Endothelial cell of umbilical vein (primary cell): ENCODE measurements at regions of chr2 and their contacts with region 1.

Region 1: DNA sequence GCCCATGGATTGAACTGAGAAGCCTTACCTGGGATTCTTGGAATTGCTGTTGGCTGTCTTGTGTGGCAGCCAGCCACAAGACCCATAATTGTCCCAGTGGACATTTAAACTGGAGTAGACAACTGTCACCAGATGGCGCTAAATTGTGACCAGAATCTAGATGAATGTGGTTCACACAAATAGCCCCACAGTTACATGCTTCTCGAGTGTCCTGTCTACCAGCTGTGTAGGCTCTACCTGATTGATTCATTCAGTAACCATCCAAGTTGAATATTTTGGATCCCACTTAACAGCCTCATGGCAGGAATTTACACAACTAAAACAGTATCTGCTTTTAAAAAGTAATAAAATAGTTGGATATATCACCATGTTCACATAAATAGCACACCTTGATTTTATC is 73.2 kb downstream of the MAP4K4 start:
- DNase-seq: peak; percentile 58
- H3K4me3 ChIP-seq: no peak overlapping the region
- H3K27ac ChIP-seq: peak overlapping the region; percentile 5
- H3K4me1 ChIP-seq: peaks cover 68% of the 10 kb centered on the region
- H3K27me3 ChIP-seq: no peaks in the 10 kb centered on the region
- CTCF ChIP-seq: peak in 1 of 2 donors; percentile 28
- POLR2A ChIP-seq: no peak

Region 2: GRCh38 chr2:101419096-101419663 is 351.5 kb before region 1 on chr2:
- CTCF ChIA-PET with region 1: interaction called, 17 read pairs
- POLR2A ChIA-PET with region 1: no interaction called
- dilution Hi-C with region 1: no loop called
- intact Hi-C with region 1: loop called (anchors 5 kb)
- DNase-seq: peak; percentile 69
- H3K4me3 ChIP-seq: no peak overlapping the region
- H3K27ac ChIP-seq: no peak overlapping the region
- H3K4me1 ChIP-seq: no peaks in the 10 kb centered on the region
- H3K27me3 ChIP-seq: no peaks in the 10 kb centered on the region
- CTCF ChIP-seq: peak; percentile 59 to 63
- POLR2A ChIP-seq: no peak

Region 3: GRCh38 chr2:101679037-101679726 is 91.5 kb before region 1 on chr2:
- CTCF ChIA-PET with region 1: no interaction called
- POLR2A ChIA-PET with region 1: no interaction called
- dilution Hi-C with region 1: no loop called
- intact Hi-C with region 1: no loop called
- DNase-seq: no peak
- H3K4me3 ChIP-seq: no peak overlapping the region
- H3K27ac ChIP-seq: no peak overlapping the region
- H3K4me1 ChIP-seq: no peaks in the 10 kb centered on the region
- H3K27me3 ChIP-seq: no peaks in the 10 kb centered on the region
- CTCF ChIP-seq: no peak
- POLR2A ChIP-seq: no peak

Region 4: GRCh38 chr2:101746388-101746723 is 24.4 kb before region 1 on chr2:
- CTCF ChIA-PET with region 1: interaction called, 17 read pairs
- POLR2A ChIA-PET with region 1: interaction called, 4 read pairs
- dilution Hi-C with region 1: no loop called
- intact Hi-C with region 1: no loop called
- DNase-seq: peak; percentile 87
- H3K4me3 ChIP-seq: peak overlapping the region in 1 of 3 experiments; percentile 26
- H3K27ac ChIP-seq: peak overlapping the region; percentile 88
- H3K4me1 ChIP-seq: peaks cover 45% of the 10 kb centered on the region
- H3K27me3 ChIP-seq: no peaks in the 10 kb centered on the region
- CTCF ChIP-seq: no peak
- POLR2A ChIP-seq: no peak

Region 5: GRCh38 chr2:101759162-101759561 is 11.6 kb before region 1 on chr2:
- CTCF ChIA-PET with region 1: interaction called, 20 read pairs
- POLR2A ChIA-PET with region 1: interaction called, 3 read pairs
- dilution Hi-C with region 1: no loop called
- intact Hi-C with region 1: no loop called
- DNase-seq: peak; percentile 95
- H3K4me3 ChIP-seq: no peak overlapping the region
- H3K27ac ChIP-seq: peak overlapping the region; percentile 73
- H3K4me1 ChIP-seq: peaks cover 41% of the 10 kb centered on the region
- H3K27me3 ChIP-seq: no peaks in the 10 kb centered on the region
- CTCF ChIP-seq: no peak
- POLR2A ChIP-seq: no peak

Region 6: GRCh38 chr2:101793277-101793969 is 22.7 kb after region 1 on chr2:
- CTCF ChIA-PET with region 1: interaction called, 10 read pairs
- POLR2A ChIA-PET with region 1: no interaction called
- dilution Hi-C with region 1: no loop called
- intact Hi-C with region 1: no loop called
- DNase-seq: no peak
- H3K4me3 ChIP-seq: no peak overlapping the region
- H3K27ac ChIP-seq: no peak overlapping the region
- H3K4me1 ChIP-seq: peaks cover 11% of the 10 kb centered on the region
- H3K27me3 ChIP-seq: no peaks in the 10 kb centered on the region
- CTCF ChIP-seq: peak in 1 of 2 donors; percentile 11
- POLR2A ChIP-seq: no peak

Region 7: DNA sequence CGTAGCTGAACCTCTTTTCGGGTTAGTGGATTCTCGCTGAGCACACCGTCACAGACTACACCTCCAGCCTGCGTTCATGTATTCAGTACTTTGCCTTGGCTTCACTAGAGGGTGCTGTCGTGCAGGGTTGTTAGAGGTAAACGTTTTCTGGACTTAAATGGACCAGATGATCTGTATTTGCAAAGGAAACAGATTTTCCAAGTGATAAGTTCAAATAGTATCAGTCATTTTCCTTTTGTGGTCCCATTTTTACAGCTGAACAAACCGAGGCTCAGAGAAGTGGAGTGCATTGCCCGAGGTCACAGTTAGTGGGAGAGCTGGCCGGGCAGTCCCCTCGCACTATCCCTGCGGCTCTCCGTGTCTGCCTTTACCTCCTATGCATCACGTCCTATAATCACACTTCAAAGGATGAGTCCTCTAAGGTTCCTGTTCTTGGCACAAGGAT is 52.6 kb after region 1 on chr2:
- CTCF ChIA-PET with region 1: interaction called, 90 read pairs
- POLR2A ChIA-PET with region 1: no interaction called
- dilution Hi-C with region 1: no loop called
- intact Hi-C with region 1: loop called (anchors 2 kb)
- DNase-seq: peak; percentile 79
- H3K4me3 ChIP-seq: no peak overlapping the region
- H3K27ac ChIP-seq: peak overlapping the region; percentile 30
- H3K4me1 ChIP-seq: peaks cover 54% of the 10 kb centered on the region
- H3K27me3 ChIP-seq: no peaks in the 10 kb centered on the region
- CTCF ChIP-seq: peak; percentile 54 to 67
- POLR2A ChIP-seq: no peak